CD4-positive, alpha-beta T cell (primary cell): ENCODE measurements at regions of chr17 and their contacts with region 1.

Region 1: GRCh38 chr17:81101614-81102306 is 63.5 kb upstream of the PVALEF start:
- DNase-seq: peak; percentile 80 to 93 (median 88)
- ATAC-seq: peak; percentile 100
- H3K4me3 ChIP-seq: no peak overlapping the region
- H3K4me3 Mint-ChIP-seq: peak overlapping the region; percentile 34
- H3K27ac ChIP-seq: no peak overlapping the region
- H3K27ac Mint-ChIP-seq: no peak overlapping the region
- H3K4me1 ChIP-seq: peaks cover 40% of the 10 kb centered on the region
- H3K4me1 Mint-ChIP-seq: peaks cover 3% of the 10 kb centered on the region
- H3K27me3 ChIP-seq: no peaks in the 10 kb centered on the region
- H3K27me3 Mint-ChIP-seq: no peaks in the 10 kb centered on the region
- CTCF ChIP-seq: peak; percentile 100

Region 2: GRCh38 chr17:80426681-80427326 is 675.0 kb before region 1 on chr17:
- CTCF ChIA-PET with region 1: interaction called, 3 read pairs
- POLR2A ChIA-PET with region 1: no interaction called
- intact Hi-C with region 1: loop called (anchors 2 kb)
- DNase-seq: peak; percentile 74 to 94 (median 84)
- ATAC-seq: peak; percentile 98
- H3K4me3 ChIP-seq: no peak overlapping the region
- H3K4me3 Mint-ChIP-seq: no peak overlapping the region
- H3K27ac ChIP-seq: no peak overlapping the region
- H3K27ac Mint-ChIP-seq: no peak overlapping the region
- H3K4me1 ChIP-seq: peaks cover 20% of the 10 kb centered on the region
- H3K4me1 Mint-ChIP-seq: peaks cover 5% of the 10 kb centered on the region
- H3K27me3 ChIP-seq: no peaks in the 10 kb centered on the region
- H3K27me3 Mint-ChIP-seq: no peaks in the 10 kb centered on the region
- CTCF ChIP-seq: peak; percentile 92

Region 3: DNA sequence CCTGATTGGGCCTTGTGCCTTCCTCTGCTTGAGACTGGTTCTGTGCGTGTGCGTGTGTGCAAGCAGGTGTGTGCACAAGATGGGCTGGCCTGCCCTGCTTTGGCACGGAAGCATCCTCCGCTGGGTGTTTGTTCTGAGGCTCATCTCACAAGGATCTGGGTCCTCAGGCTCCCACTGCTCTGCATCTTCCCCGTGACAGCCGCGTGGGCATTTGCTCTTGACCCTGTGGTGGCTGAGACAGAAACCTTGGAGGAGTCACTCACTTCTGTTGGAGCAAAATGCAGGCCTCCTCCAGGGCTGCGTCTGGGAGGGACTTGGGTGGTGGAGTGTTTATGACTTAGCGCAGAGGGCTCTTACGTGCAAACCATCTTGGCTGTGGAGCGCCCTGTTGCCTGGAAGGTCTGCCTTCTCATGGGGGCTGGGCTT is 438.0 kb before region 1 on chr17:
- CTCF ChIA-PET with region 1: no interaction called
- POLR2A ChIA-PET with region 1: no interaction called
- intact Hi-C with region 1: no loop called
- DNase-seq: peak; percentile 19 to 82 (median 42)
- ATAC-seq: peak; percentile 69
- H3K4me3 ChIP-seq: no peak overlapping the region
- H3K4me3 Mint-ChIP-seq: peak overlapping the region; percentile 71
- H3K27ac ChIP-seq: peak overlapping the region; percentile 61 to 88
- H3K27ac Mint-ChIP-seq: peak overlapping the region; percentile 99
- H3K4me1 ChIP-seq: peaks cover 60% of the 10 kb centered on the region
- H3K4me1 Mint-ChIP-seq: peaks cover 81% of the 10 kb centered on the region
- H3K27me3 ChIP-seq: no peaks in the 10 kb centered on the region
- H3K27me3 Mint-ChIP-seq: no peaks in the 10 kb centered on the region
- CTCF ChIP-seq: no peak

Region 4: DNA sequence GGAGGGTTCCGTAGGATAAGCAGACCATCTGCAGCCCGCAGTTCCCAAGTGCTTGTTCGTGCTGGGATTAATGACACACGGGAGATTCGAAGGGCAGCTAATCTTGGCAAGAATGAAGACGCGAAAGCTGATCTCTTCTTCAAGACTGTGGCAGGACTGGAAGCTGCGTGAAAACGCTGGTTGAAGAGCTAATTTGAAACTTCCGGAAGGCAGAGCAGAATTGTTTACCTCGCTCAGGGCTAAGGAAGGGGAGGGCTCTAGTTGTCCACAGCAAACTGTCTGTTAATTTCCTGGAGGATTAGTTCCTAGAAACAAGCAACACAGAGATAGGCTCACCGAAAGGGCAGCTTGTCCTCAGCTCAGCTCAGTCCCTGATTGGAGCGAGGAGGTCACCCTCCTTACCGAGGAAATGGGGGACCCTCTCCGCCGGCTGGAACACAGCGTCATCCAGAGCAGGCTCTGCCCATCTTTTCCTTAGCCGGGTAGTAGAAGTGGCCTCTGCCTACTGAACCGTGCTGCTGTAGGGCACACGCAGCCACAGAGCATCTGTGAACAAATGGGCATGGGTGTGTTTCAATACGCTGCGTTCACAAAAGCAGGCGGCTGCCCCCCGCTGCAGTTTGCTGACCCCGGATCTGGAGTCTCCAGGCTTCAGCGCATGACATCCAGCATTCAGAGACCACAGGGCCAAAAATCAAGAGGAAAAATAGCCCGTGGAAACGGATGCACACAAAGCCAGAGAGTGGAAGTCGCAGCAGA is 83.5 kb before region 1 on chr17:
- CTCF ChIA-PET with region 1: interaction called, 35 read pairs
- POLR2A ChIA-PET with region 1: no interaction called
- intact Hi-C with region 1: loop called in 1 of 2 experiments (anchors 1 kb)
- DNase-seq: peak in 12 of 14 experiments; percentile 22 to 73 (median 38)
- ATAC-seq: peak; percentile 88
- H3K4me3 ChIP-seq: peak overlapping the region; percentile 60
- H3K4me3 Mint-ChIP-seq: peak overlapping the region; percentile 84
- H3K27ac ChIP-seq: peak overlapping the region; percentile 56 to 81
- H3K27ac Mint-ChIP-seq: peak overlapping the region; percentile 93
- H3K4me1 ChIP-seq: peaks cover 34% of the 10 kb centered on the region
- H3K4me1 Mint-ChIP-seq: peaks cover 26% of the 10 kb centered on the region
- H3K27me3 ChIP-seq: no peaks in the 10 kb centered on the region
- H3K27me3 Mint-ChIP-seq: no peaks in the 10 kb centered on the region
- CTCF ChIP-seq: no peak

Region 5: GRCh38 chr17:81064678-81065475 is 36.9 kb before region 1 on chr17:
- CTCF ChIA-PET with region 1: interaction called, 3 read pairs
- POLR2A ChIA-PET with region 1: no interaction called
- intact Hi-C with region 1: loop called in 1 of 2 experiments (anchors 5 kb)
- DNase-seq: no peak
- ATAC-seq: no peak
- H3K4me3 ChIP-seq: no peak overlapping the region
- H3K4me3 Mint-ChIP-seq: no peak overlapping the region
- H3K27ac ChIP-seq: no peak overlapping the region
- H3K27ac Mint-ChIP-seq: no peak overlapping the region
- H3K4me1 ChIP-seq: peaks cover 7% of the 10 kb centered on the region
- H3K4me1 Mint-ChIP-seq: no peaks in the 10 kb centered on the region
- H3K27me3 ChIP-seq: no peaks in the 10 kb centered on the region
- H3K27me3 Mint-ChIP-seq: no peaks in the 10 kb centered on the region
- CTCF ChIP-seq: no peak

Region 6: DNA sequence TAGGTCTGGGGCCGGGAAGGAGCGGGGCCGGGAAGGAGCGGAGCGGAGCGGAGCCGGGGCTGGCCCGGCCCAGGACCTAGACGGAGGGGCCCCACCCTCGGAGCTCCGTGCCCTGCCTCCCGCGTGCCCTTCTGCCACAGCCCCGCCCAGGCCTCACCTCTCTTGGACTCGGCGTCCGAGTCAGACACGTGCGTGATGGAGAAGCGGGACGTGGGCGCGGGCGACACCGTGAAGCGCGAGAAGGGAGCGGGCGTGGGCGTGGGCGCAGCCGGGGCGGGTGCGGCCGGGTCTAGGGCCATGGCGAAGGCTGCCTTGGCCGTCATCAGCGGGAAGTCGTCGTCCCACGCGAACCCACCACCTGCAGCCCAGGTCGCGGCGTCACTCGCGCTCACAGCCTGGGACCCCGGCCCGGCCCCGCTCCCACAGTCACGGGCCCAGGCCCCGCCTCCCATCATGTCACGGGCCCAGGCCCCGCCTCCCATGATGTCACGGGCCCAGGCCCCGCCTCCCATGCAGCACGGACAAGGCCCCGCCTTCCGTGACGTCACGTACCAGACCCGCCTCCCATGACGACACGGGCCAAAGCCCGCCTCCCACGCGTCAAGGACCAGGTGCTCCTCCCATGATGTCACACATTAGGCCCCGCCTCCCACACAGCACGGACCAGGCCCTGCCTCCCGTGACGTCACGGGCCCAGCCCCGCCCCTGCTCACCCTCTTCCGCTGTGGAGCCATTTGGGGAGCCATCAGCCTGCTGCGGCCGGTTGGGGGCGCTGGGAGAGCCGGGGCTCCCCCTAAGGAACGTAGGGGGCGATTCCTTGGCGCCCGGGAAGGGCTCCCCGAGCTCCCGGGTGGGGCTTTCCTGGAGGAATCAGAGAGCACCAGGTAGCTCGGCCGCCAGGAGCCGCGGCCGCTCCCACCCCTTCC is 17.7 kb after region 1 on chr17:
- CTCF ChIA-PET with region 1: interaction called, 13 read pairs
- POLR2A ChIA-PET with region 1: no interaction called
- intact Hi-C with region 1: no loop called
- DNase-seq: peak; percentile 38 to 94 (median 78)
- ATAC-seq: peak; percentile 82
- H3K4me3 ChIP-seq: peak overlapping the region; percentile 5
- H3K4me3 Mint-ChIP-seq: peak overlapping the region; percentile 82
- H3K27ac ChIP-seq: no peak overlapping the region
- H3K27ac Mint-ChIP-seq: peak overlapping the region; percentile 63
- H3K4me1 ChIP-seq: peaks cover 14% of the 10 kb centered on the region
- H3K4me1 Mint-ChIP-seq: no peaks in the 10 kb centered on the region
- H3K27me3 ChIP-seq: no peaks in the 10 kb centered on the region
- H3K27me3 Mint-ChIP-seq: no peaks in the 10 kb centered on the region
- CTCF ChIP-seq: no peak